ENCODE measurements at regions of chr5 and their contacts with region 1.

Region 1: GRCh38 chr5:74517700-74518099 is 122.8 kb downstream of the ENC1 start:
- DNase-seq: peak; percentile 32
- H3K4me3 ChIP-seq: no peak overlapping the region
- H3K27ac ChIP-seq: no peak overlapping the region
- H3K27me3 ChIP-seq: no peaks in the 10 kb centered on the region
- CTCF ChIP-seq: no peak

Region 2: DNA sequence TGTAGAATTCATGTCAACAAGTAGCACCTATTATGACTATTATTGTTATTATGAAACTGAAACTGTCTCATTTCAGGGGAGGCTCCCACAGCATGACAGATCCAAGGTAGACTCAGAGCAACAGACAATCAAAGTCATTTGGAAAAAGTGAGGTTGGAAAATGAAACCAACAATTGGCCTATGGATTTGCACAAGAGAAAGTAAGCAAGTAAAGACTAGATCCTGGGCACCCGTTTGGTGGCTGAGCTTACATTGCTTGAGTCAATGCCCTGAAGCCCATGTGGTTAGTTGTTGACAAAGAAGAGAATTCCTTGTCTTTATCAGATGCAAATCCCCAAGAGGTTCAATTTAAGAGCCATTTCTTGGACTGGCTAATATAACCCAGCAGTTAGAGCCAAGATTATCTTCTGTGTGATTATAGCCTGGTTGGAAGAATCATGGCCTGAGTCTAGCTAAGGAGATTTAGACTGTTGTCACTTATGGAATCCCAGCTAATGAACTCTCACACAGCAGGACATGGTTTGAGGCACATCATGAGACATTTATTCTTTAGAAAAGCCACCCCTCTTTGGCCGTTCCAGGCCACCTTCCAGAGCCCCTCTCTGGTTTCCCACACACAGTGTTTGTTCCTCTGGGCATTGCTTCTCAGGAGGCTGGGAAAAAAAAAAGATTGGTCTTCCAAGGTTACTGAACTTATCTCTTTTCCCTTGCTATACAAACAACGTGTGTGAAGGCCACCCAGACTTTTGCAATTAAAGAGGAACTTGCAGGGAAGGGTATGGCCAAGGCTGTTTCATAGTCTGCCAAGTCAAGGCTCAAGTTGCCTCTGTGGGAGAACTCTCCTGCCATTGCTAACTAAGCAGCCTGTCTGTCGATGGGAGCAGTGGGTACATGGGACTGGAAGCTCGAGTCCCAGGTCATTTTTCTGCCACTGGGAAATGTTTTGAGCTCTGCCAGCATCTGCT is 276.6 kb before region 1 on chr5:
- CTCF ChIA-PET with region 1: no interaction called
- POLR2A ChIA-PET with region 1: no interaction called
- DNase-seq: no peak
- H3K4me3 ChIP-seq: no peak overlapping the region
- H3K27ac ChIP-seq: no peak overlapping the region
- H3K27me3 ChIP-seq: no peaks in the 10 kb centered on the region
- CTCF ChIP-seq: no peak

Region 3: GRCh38 chr5:74543156-74543995 is 25.7 kb after region 1 on chr5:
- CTCF ChIA-PET with region 1: no interaction called
- POLR2A ChIA-PET with region 1: no interaction called
- DNase-seq: no peak
- H3K4me3 ChIP-seq: peak overlapping the region; percentile 11; the same call in 1 of the 2 replicates
- H3K27ac ChIP-seq: peak overlapping the region; percentile 62
- H3K27me3 ChIP-seq: no peaks in the 10 kb centered on the region
- CTCF ChIP-seq: no peak

Region 4: DNA sequence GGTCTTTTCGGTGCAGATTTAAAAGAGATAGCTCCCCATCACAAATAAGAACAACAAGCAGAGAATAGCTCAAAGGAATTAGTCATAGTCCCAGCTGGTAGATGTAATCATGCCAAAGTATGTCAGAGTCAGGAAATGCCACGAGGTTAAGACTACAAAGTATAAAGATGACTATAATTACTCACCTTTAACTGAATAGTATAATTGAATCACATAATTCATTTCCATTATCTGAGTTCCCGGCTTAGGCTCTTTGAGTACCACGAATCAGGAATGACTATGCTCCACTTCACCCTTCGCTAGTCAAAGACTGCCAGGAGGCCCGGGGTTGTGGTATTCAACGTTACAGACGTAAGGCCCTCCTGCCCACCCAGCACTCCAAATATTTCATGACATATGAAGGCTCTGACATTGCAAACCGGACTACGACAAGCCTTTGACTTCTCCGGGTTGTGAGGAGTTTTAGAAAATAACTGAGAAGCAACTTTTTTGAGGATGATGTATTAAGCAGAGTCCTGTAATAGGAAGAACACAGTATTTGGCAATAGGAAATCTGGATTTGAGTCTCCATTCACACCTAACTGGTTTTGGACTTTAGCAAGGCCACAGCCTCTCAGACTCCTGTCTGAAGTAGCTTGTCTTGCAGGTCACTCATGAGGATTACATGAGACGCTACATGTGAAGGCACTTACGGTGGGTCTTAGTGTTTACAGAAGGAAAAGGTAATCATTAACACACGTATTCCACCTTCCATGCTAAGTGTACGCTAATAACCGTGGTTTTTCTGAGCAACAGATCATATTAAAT is 58.2 kb after region 1 on chr5:
- CTCF ChIA-PET with region 1: interaction called, 13 read pairs
- POLR2A ChIA-PET with region 1: no interaction called
- DNase-seq: no peak
- H3K4me3 ChIP-seq: no peak overlapping the region
- H3K27ac ChIP-seq: no peak overlapping the region
- H3K27me3 ChIP-seq: no peaks in the 10 kb centered on the region
- CTCF ChIP-seq: no peak

Measured in AG04450 (cell line).